ENCODE measurements at regions of chr17 and their contacts with region 1.

Region 1: DNA sequence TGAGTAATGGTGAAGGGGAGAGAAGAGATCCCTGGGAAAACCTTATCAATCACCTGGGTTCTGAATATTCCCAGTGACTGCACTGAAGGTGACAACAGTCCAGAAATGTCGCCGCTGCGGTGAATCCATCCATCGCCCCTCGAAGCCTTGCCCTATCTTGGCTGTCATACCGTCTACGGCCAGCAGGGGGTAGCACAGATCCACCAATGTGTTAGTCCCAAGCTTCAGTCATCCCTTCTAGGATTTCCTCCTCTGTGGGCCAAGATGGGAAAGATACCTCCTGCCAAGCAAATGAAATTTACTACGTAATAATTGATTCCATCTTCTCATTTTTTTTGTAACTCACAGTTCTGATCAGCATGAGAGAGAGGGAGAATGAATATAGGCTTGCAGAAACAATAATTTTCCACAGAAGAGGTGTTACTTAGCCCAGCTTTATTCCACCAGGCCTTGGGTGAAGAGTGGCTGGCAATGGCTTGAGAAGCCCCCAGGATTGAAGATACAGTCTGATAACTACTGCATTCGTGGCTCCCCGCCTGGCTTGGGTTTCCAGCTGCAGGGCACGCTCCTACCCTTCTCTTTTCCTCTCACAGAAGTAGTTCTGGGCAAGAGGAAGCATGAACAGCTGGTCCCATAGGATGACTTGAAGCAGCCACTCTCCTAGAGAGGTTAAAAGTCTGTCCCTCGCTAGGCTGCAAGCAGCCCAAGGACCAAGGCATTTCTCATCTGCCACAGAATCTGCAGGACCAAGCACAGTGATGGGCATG is 2.6 kb upstream of the FMNL1 start:
- DNase-seq: peak; percentile 37
- H3K4me3 ChIP-seq: peak overlapping the region; percentile 30
- CTCF ChIP-seq: peak; percentile 86

Region 2: GRCh38 chr17:45184144-45184543 is 34.9 kb before region 1 on chr17:
- CTCF ChIA-PET with region 1: no interaction called
- POLR2A ChIA-PET with region 1: no interaction called
- DNase-seq: no peak
- H3K4me3 ChIP-seq: no peak overlapping the region
- CTCF ChIP-seq: no peak

Region 3: DNA sequence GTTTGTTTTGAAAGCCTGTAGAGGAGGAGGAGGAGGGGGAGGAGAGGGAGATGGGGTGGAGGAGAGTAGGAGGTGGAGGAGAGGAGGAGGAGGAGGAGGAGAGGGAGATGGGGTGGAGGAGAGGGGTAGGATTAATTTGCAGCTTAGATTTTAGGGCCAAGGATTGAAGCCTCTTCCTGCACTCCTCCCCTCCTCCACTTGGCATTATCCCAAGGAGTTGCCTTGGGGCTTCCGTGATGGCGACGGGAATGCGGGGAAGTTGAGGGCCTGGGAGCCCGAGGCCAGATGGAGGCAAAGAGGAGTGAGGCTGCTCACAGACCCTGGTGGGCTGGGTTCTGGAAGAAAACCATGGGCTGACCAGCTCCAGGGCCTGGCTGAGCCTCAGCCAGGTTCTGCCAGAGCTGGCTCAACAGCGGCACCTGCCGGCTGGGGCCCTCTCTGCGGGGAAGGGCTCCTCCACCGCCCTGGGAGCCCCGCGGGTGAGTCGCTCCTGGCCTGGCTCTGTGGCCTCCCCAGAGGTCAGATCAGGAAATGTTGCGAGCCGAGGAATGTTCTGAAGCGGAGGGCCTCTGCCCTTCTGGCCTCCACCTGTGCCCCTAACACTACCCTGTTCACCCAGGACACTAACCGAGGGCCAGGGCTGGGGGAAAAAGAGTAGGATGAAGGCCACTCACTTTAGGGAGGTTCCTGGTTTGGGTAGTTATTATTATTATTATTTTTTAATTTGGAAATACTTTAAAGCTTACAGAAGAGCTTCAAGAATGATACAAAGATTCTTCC is 21.3 kb before region 1 on chr17:
- CTCF ChIA-PET with region 1: interaction called, 17 read pairs
- POLR2A ChIA-PET with region 1: no interaction called
- DNase-seq: peak; percentile 10
- H3K4me3 ChIP-seq: peak overlapping the region; percentile 12; the same call in 1 of the 2 replicates
- CTCF ChIP-seq: peak; percentile 99

Region 4: DNA sequence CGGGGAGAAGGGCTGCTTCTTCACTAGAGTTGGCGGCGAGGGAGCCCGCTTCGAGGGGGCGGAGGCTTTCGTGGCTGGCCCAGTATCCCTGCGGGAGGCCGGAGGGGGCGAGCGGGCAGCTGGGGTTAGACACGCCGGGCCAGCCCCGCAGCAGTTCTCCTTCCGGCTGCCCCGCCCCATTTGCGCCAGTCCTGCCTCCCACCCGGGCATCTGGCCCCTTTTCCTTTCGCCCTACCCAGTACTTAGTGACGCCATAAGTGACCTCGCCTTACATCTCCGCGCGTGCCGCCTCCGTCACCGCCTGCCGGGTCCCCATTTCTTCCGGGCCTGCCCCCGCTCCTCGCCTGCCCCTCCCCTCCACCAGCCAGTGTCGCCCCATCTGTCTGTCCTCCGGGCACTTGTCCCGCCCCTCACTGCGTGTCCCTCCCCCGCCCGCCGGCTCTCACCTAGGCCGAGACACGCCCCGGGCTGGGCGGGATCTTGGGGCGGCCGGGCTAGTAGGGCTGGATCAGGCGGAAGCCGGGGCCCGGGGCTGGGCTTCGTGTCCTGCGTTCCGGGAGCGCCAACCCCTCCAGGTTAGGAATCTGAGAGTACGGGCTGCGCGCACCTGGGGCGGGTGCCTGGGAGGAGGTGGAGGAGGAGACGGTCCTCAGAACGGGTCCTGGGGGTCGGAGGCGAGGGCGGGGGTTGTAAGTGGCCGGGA is 28.5 kb after region 1 on chr17:
- CTCF ChIA-PET with region 1: interaction called, 14 read pairs
- POLR2A ChIA-PET with region 1: no interaction called
- DNase-seq: no peak
- H3K4me3 ChIP-seq: peak overlapping the region; percentile 56
- CTCF ChIP-seq: no peak

Region 5: GRCh38 chr17:45277216-45277849 is 58.3 kb after region 1 on chr17:
- CTCF ChIA-PET with region 1: interaction called, 20 read pairs
- POLR2A ChIA-PET with region 1: no interaction called
- DNase-seq: peak; percentile 56
- H3K4me3 ChIP-seq: no peak overlapping the region
- CTCF ChIP-seq: peak; percentile 90

Region 6: DNA sequence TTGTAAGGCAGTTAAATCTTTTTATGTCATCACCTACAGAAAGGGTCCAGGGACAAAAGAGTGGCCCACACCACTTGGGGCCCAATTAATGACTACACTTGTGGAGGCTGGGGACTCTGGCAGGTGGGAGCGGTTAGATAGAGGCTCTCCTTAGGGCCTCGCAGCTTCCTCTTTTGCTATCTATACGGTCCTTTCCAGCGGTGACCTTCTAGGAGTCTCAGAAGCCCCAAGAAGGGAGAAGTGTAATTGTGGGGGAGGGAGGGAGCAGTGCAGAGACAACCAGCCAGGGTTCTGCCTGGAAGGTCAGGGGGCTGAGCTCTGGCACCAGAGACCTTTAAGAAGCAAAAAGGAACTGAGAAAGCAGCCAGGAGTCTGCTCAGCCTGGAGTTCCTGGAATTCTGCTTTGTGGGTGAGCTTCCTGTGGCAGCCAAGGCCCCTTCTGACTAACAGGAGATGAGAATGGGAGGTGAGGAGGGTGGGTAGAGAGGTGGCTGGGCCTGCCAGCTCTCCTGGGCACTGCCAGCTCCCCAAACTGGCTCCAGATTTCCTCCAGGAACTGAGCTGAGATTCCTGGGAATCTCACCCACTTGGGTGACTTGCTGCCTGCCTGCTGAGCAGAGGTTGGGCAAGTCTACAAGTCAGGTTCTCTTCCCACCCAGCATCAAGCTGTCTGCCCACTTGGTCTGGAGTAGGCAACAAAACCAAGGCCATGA is 114.1 kb after region 1 on chr17:
- CTCF ChIA-PET with region 1: no interaction called
- POLR2A ChIA-PET with region 1: no interaction called
- DNase-seq: no peak
- H3K4me3 ChIP-seq: no peak overlapping the region
- CTCF ChIP-seq: no peak

Region 7: GRCh38 chr17:45394913-45395568 is 176.0 kb after region 1 on chr17:
- CTCF ChIA-PET with region 1: interaction called, 138 read pairs
- POLR2A ChIA-PET with region 1: no interaction called
- DNase-seq: no peak
- H3K4me3 ChIP-seq: peak overlapping the region; percentile 51
- CTCF ChIP-seq: peak; percentile 81

Region 8: DNA sequence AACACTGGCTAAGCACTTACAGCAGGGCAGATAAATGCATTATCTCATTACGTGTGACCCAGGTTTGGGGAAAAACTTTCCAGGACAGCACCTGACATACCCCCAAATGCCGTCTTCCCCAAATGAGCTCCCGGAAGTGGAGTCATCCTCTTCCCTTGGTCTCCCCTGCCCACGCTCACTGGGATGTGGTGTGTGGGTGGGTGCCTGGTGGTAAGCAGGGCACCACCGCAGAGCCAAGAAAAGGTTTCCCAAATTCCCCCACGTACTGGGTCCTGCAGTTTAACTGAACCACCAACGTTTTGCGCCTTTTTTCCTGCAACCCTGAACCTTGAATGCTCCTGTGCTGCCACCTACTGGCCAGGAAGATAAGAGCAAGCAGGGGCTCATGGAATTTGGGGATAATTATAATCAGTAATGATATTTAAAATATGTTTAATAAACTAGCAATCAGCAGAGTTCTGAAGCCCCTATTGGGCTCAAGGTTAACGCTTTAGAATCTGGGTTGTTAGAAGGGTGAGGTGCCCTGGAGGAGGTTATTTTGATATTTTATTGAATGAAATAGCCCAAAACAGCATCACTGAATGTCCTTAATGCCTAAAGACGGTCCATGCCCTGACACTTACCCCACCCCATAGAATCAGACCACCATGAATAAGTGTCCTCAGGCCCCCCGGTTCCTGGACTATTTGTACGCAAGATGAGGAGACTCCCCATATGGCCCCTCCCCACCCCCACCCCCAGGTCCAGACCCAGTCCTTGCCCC is 633.6 kb after region 1 on chr17:
- CTCF ChIA-PET with region 1: interaction called, 10 read pairs
- POLR2A ChIA-PET with region 1: no interaction called
- DNase-seq: no peak
- H3K4me3 ChIP-seq: no peak overlapping the region
- CTCF ChIP-seq: peak; percentile 79